ENCODE measurements at regions of chr12 and their contacts with region 1.

Region 1: GRCh38 chr12:130013771-130014484 is 110.1 kb upstream of the TMEM132D start:
- DNase-seq: peak; percentile 35
- ATAC-seq: peak; percentile 91
- H3K4me3 ChIP-seq: no peak overlapping the region
- H3K27ac ChIP-seq: no peak overlapping the region
- H3K4me1 ChIP-seq: no peaks in the 10 kb centered on the region
- H3K27me3 ChIP-seq: peaks cover 2% of the 10 kb centered on the region; the same call in 1 of the 2 replicates
- CTCF ChIP-seq: peak; percentile 89

Region 2: DNA sequence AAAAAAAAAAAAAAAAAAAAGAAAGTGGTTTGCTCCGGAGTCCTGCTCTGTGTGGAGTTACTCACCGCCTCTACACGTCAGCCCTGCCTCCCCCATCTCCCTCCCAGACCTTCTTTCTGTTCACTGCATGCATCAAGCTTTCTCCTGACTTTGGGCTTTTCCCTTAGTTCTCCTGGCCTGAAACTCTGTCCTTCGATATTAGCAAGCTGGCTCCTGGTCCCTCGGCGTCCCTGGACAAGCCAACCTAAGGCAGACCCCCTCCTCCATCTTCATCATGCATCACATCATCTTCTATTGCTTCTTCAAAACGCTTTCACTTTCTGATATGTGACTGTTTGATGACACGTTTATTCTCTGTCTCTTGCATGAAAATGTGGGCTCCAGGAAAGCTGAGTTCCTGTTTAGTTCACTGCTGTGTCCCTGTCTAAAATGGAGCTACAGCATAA is 1230.8 kb before region 1 on chr12:
- CTCF ChIA-PET with region 1: no interaction called
- POLR2A ChIA-PET with region 1: no interaction called
- in situ Hi-C with region 1: no loop called
- intact Hi-C with region 1: loop called (anchors 5 kb)
- DNase-seq: no peak
- ATAC-seq: no peak
- H3K4me3 ChIP-seq: no peak overlapping the region
- H3K27ac ChIP-seq: no peak overlapping the region
- H3K4me1 ChIP-seq: no peaks in the 10 kb centered on the region
- H3K27me3 ChIP-seq: no peaks in the 10 kb centered on the region
- CTCF ChIP-seq: no peak

Region 3: DNA sequence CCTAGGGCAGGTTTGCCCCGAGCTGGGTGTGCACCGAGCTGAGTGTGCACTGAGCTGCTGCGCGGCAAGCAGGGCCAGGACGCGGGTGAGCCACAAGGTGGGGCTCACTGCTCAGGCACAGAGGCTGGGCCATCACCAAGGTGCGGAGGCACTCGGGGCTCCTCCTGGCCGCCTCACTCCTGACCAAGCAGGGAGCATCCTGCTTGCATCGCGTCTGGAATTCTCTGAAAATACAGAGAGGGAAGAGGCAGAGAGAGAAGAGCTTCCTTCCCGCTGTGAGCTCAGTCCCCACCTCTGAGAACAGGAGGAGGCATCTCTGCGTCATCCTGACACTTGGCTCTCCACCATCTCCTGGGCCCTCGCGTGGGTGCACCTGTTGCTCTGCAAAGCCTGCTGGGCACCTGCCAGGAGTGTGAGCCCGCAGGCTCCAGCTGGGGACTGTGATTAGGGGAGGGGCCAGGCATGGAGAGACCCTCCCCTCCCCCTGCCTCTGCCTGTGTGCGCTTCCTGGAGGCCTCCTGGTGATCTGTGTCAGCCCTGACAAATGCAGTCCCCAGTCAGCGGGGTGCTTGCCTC is 1044.4 kb before region 1 on chr12:
- CTCF ChIA-PET with region 1: no interaction called
- POLR2A ChIA-PET with region 1: no interaction called
- in situ Hi-C with region 1: no loop called
- intact Hi-C with region 1: loop called (anchors 5 kb)
- DNase-seq: no peak
- ATAC-seq: peak; percentile 97
- H3K4me3 ChIP-seq: no peak overlapping the region
- H3K27ac ChIP-seq: no peak overlapping the region
- H3K4me1 ChIP-seq: no peaks in the 10 kb centered on the region; the same call in 1 of the 2 replicates
- H3K27me3 ChIP-seq: peaks cover 6% of the 10 kb centered on the region; the same call in 1 of the 2 replicates
- CTCF ChIP-seq: peak; percentile 86

Measured in Panc1 (cell line).